Left ventricle myocardium inferior (tissue), 1 donor: ENCODE measurements at regions of chr1 and their contacts with region 1.

Region 1: GRCh38 chr1:151934048-151934493 is 24.8 kb upstream of the THEM4 start:
- DNase-seq: no peak
- H3K4me3 ChIP-seq: no peak overlapping the region
- H3K27ac ChIP-seq: no peak overlapping the region
- H3K4me1 ChIP-seq: no peaks in the 10 kb centered on the region
- H3K27me3 ChIP-seq: no peaks in the 10 kb centered on the region
- CTCF ChIP-seq: peak; percentile 93

Region 2: GRCh38 chr1:151799179-151799949 is 134.7 kb before region 1 on chr1:
- intact Hi-C with region 1: no loop called
- DNase-seq: no peak
- H3K4me3 ChIP-seq: no peak overlapping the region
- H3K27ac ChIP-seq: no peak overlapping the region
- H3K4me1 ChIP-seq: no peaks in the 10 kb centered on the region
- H3K27me3 ChIP-seq: peaks cover 42% of the 10 kb centered on the region
- CTCF ChIP-seq: no peak

Region 3: DNA sequence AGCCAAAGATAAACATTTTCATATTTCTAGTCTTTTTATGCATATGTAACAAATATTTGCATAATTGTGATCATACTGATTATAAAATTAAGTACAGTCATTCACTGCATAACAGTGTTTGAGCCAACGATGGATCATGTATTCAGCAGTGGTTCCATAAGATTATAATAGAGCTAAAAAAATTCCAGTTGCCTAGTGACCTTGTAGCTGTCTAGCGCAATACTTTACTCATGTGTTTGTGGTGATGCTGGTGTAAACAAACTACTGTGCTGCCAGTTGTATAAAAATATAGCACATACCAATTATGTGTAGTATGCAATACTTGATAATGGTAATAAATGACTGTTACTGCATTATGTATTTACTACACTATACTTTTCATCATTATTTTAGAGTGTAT is 61.7 kb after region 1 on chr1:
- intact Hi-C with region 1: loop called (anchors 2 kb)
- DNase-seq: no peak
- H3K4me3 ChIP-seq: no peak overlapping the region
- H3K27ac ChIP-seq: peak overlapping the region; percentile 98
- H3K4me1 ChIP-seq: peaks cover 46% of the 10 kb centered on the region
- H3K27me3 ChIP-seq: no peaks in the 10 kb centered on the region
- CTCF ChIP-seq: no peak